Mammary epithelial cell (primary cell): ENCODE measurements at regions of chr7 and their contacts with region 1.

Region 1: DNA sequence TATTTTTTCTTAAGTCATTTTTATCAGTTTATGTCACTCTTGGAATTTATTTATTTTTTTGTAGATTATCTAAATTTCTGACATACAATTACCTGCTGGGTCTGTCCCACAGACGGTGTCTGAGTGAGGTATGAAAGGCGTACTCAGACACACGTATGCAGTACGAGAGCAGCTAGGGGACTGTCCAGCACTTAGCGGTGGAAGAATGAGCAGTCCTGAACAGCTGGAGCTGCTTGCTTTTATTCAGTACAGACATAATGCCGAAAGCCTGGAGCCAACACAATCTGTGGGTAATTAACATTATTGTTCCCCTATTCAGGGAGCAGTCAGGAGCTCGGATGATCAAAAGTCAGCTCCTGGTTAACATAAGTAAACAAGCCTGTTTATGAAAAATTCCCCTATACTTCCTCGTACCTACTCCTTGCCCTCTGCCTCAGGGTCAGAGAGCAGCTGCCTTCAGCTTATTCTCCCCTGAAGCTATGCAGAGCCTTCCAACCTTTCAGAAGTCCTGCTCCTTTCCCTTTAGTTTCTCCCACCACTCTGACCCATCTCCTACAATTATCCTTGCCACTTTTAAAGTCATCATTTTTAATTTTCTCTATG is 488.0 kb upstream of the POM121L12 start:
- DNase-seq: no peak
- H3K4me3 ChIP-seq: no peak overlapping the region
- H3K27ac ChIP-seq: no peak overlapping the region
- H3K4me1 ChIP-seq: no peaks in the 10 kb centered on the region
- H3K27me3 ChIP-seq: no peaks in the 10 kb centered on the region
- CTCF ChIP-seq: no peak

Region 2: GRCh38 chr7:52500841-52501240 is 46.6 kb before region 1 on chr7:
- CTCF ChIA-PET with region 1: no interaction called
- dilution Hi-C with region 1: no loop called
- in situ Hi-C with region 1: no loop called
- intact Hi-C with region 1: loop called (anchors 5 kb)
- DNase-seq: peak; percentile 19
- H3K4me3 ChIP-seq: no peak overlapping the region
- H3K27ac ChIP-seq: peak overlapping the region; percentile 54
- H3K4me1 ChIP-seq: peaks cover 8% of the 10 kb centered on the region
- H3K27me3 ChIP-seq: no peaks in the 10 kb centered on the region
- CTCF ChIP-seq: no peak

Region 3: GRCh38 chr7:52512656-52513055 is 34.8 kb before region 1 on chr7:
- CTCF ChIA-PET with region 1: no interaction called
- dilution Hi-C with region 1: no loop called
- in situ Hi-C with region 1: no loop called
- intact Hi-C with region 1: no loop called
- DNase-seq: no peak
- H3K4me3 ChIP-seq: no peak overlapping the region
- H3K27ac ChIP-seq: no peak overlapping the region
- H3K4me1 ChIP-seq: no peaks in the 10 kb centered on the region
- H3K27me3 ChIP-seq: no peaks in the 10 kb centered on the region
- CTCF ChIP-seq: no peak

Region 4: GRCh38 chr7:53013925-53014324 is 466.5 kb after region 1 on chr7:
- CTCF ChIA-PET with region 1: no interaction called
- dilution Hi-C with region 1: no loop called
- in situ Hi-C with region 1: no loop called
- intact Hi-C with region 1: no loop called
- DNase-seq: no peak
- H3K4me3 ChIP-seq: no peak overlapping the region
- H3K27ac ChIP-seq: no peak overlapping the region
- H3K4me1 ChIP-seq: no peaks in the 10 kb centered on the region
- H3K27me3 ChIP-seq: no peaks in the 10 kb centered on the region
- CTCF ChIP-seq: no peak